Activated B cell treated with CpG ODN at 0.5 μM for 24 hours (primary cell): ENCODE measurements at regions of chr15 and their contacts with region 1.

Region 1: DNA sequence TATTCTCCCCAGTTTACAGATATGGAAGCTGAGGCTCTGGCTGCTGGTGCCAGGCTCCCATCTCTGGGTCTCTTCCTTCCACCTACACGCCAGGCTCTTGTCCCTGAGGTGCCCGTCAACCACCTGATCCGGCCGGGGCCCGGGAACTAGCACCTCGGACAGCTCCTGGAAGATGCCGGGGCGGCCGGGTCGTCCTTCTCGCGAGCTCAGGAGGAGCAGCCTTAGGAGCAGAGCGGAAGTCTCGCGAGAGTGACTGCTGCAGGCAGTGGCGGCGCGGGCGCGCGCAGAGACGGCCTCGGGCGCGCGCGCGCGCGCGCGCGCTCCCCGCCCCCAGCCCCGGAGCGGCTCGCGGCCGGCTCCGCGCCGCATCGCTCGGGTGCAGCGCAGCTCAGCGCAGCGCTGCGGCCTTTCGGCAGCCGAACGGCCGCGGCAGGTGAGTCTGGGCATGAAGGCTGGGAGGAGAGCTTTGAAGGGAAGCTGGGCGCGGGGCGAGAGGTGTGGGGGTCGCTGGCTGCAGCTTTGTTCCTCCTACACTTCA is at the start of gene SCAMP5:
- DNase-seq: peak; percentile 70
- ATAC-seq: peak; percentile 99
- H3K4me3 Mint-ChIP-seq: peak within 1 kb of the TSS; percentile 78
- H3K27ac Mint-ChIP-seq: no peak within 1 kb of the TSS
- H3K4me1 Mint-ChIP-seq: peaks cover 24% of the 10 kb centered on the region
- H3K27me3 Mint-ChIP-seq: peaks cover 66% of the 10 kb centered on the region
- CTCF ChIP-seq: no peak
- total RNA-seq, gene SCAMP5: 0.44 and 0.62 TPM in 2 replicates

Region 2: DNA sequence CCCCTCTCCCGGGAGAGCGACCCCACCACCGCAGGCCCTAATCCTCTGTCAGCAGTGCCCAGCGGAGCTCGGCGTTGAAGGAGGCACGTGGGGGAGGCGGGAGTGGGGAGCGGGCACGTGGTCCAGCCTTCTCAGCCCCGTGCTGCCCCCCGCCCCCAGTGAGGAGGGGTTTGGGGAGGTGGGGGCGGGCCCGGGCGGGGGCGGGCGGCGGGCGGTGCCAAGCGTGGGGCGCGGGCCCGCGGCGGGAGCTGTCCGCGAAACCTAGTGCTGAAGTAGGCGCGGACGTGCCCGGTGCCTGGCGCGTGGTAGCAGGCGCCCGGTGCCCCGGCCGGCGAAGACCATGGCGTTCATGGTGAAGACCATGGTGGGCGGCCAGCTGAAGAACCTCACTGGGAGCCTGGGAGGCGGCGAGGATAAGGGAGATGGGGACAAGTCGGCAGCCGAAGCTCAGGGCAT is 168.9 kb before region 1 on chr15 and contains the start of gene CPLX3:
- CTCF ChIA-PET with region 1: no interaction called
- POLR2A ChIA-PET with region 1: no interaction called
- intact Hi-C with region 1: loop called (anchors 1 kb)
- DNase-seq: peak; percentile 43
- ATAC-seq: peak; percentile 49
- H3K4me3 Mint-ChIP-seq: no peak within 1 kb of the TSS
- H3K27ac Mint-ChIP-seq: no peak within 1 kb of the TSS
- H3K4me1 Mint-ChIP-seq: peaks cover 13% of the 10 kb centered on the region
- H3K27me3 Mint-ChIP-seq: peaks cover 21% of the 10 kb centered on the region
- CTCF ChIP-seq: no peak
- total RNA-seq, gene CPLX3: 0.20 and 0.22 TPM in 2 replicates